ENCODE measurements at regions of chr9 and their contacts with region 1.

Region 1: DNA sequence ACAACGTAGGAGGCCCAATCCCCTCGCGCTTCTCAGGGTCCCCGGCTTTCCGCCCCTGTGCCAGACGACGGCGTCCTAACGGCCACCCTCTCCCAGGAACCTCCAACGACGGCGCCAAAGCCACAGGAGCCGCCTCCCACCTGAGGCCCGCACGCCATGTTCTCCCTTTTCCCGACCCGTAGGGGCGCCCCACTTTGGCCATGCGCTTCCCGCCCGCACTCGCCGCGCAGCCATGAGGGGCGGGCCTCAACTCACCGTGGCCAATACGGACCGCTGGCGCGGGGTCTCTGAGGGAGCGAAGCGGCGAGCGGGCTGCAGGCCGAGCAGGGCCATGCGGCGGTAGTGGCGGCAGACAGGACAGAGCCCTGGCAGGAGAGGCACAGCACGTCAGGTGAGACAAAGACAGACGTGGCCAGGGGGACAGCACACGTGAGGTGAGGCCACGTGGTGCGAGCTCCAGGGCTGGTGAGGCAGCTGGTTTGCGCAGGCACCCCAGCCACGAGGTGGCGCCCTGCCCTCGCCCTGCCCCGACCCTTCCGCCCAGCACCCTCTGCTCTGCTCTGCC is 1005.5 kb upstream of the PTPRD start:
- DNase-seq: no peak
- ATAC-seq: no peak
- H3K4me3 ChIP-seq: no peak overlapping the region
- H3K27ac ChIP-seq: no peak overlapping the region
- H3K4me1 ChIP-seq: no peaks in the 10 kb centered on the region
- H3K27me3 ChIP-seq: no peaks in the 10 kb centered on the region
- CTCF ChIP-seq: no peak

Region 2: DNA sequence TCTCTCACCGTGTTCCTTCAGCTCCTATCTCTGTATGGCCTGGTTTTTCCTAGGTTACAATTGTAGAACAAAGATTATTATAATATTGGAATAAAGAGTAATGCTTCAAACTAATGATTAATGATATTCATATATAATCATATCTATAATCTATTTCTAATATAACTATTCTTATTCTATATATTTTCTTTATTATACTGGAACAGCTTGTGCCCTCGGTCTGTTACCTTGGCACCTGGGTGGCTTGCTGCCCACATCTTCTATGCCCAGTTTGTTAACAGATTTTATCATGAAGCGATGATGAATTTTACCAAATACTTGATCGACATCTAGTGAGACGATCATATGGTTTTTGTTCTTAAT is 711.3 kb after region 1 on chr9:
- CTCF ChIA-PET with region 1: no interaction called
- POLR2A ChIA-PET with region 1: no interaction called
- intact Hi-C with region 1: loop called (anchors 10 kb)
- DNase-seq: no peak
- ATAC-seq: no peak
- H3K4me3 ChIP-seq: no peak overlapping the region
- H3K27ac ChIP-seq: no peak overlapping the region
- H3K4me1 ChIP-seq: no peaks in the 10 kb centered on the region
- H3K27me3 ChIP-seq: no peaks in the 10 kb centered on the region
- CTCF ChIP-seq: no peak